Activated naive CD4-positive, alpha-beta T cell treated with anti-CD3 and anti-CD28 coated beads for 36 hours (primary cell): ENCODE measurements at regions of chr3 and their contacts with region 1.

Region 1: DNA sequence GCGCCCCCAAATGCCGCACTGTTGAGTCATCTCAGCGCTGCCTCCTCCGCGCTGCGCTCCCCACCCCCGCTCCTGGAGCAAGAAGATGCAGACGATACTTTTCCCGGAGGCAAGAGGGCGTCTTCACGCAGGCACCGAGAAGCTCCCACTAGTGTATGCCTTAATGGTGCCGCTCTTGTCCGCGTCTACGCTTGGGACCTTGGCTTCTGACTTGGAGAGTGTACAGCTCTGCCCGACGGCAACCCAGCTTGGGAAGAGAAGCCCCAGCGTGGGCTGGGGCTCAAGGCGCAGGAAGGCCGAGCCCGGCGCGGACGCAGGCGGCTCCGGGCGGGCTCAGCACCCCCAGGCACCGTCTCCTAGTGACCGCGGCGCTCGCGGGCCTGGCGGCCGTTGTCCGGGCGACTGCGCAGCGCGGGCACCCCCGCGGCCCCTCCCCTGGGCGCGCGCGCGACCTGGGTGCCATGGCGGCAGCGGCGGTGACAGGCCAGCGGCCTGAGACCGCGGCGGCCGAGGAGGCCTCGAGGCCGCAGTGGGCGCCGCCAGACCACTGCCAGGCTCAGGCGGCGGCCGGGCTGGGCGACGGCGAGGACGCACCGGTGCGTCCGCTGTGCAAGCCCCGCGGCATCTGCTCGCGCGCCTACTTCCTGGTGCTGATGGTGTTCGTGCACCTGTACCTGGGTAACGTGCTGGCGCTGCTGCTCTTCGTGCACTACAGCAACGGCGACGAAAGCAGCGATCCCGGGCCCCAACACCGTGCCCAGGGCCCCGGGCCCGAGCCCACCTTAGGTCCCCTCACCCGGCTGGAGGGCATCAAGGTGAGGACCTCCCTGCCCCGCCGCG is at the start of gene P4HTM:
- DNase-seq: peak; percentile 88
- H3K4me3 Mint-ChIP-seq: peak within 1 kb of the TSS; percentile 94
- H3K27ac Mint-ChIP-seq: peak within 1 kb of the TSS; percentile 93
- H3K4me1 Mint-ChIP-seq: peaks cover 36% of the 10 kb centered on the region
- H3K27me3 Mint-ChIP-seq: no peaks in the 10 kb centered on the region
- total RNA-seq, gene P4HTM: 20.2 to 21.7 TPM

Region 2: DNA sequence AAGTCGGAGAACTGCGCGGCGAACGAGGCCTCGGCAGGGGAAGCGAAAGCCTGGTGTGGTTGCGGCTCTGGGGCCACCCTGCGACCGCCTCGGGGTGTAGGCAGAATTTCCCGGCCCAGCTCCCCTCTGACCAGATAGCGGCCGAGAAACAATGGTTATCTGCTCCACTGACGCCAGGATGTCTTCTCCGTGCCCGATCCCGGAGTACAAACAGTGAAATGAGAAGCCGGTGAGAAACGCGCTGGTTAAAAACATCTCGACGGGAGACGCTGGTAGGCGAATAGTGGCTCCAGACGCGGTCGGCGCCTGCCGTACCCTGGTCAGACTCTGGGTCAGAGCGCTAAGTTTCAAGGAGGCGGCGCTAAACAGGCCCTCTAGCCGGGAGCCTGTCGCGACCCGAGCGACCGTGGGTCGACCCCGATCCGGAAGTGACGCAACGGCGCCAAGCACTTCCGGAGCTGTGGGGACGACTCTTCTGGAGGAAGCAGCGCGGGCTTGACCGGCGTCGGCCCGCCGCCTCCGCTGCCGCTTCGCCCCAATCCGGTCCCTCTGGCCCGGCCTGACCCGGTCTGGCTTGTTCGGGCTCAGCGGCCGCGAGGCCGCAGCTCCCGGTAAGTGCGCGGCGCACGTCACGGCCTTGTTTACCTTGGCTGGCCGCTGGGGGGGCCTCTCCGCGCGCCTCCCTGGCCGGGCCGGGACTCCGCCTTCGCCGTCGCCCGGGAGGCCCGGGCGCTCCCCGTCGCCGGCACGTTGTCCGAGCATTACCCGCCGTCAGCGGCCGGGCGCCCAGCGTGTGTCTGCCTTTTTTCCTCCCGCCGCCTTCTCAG is 71.4 kb before region 1 on chr3 and contains the start of gene ARIH2:
- CTCF ChIA-PET with region 1: interaction called, 10 read pairs
- intact Hi-C with region 1: loop called (anchors 2 kb)
- DNase-seq: peak; percentile 89
- H3K4me3 Mint-ChIP-seq: peak within 1 kb of the TSS; percentile 98
- H3K27ac Mint-ChIP-seq: peak within 1 kb of the TSS; percentile 100
- H3K4me1 Mint-ChIP-seq: peaks cover 29% of the 10 kb centered on the region
- H3K27me3 Mint-ChIP-seq: no peaks in the 10 kb centered on the region
- total RNA-seq, gene ARIH2: 96.1 to 99.1 TPM

Region 3: GRCh38 chr3:49013755-49014628 is 24.0 kb after region 1 on chr3:
- CTCF ChIA-PET with region 1: interaction called, 23 read pairs
- intact Hi-C with region 1: no loop called
- DNase-seq: no peak
- H3K4me3 Mint-ChIP-seq: no peak overlapping the region
- H3K27ac Mint-ChIP-seq: no peak overlapping the region
- H3K4me1 Mint-ChIP-seq: peaks cover 10% of the 10 kb centered on the region
- H3K27me3 Mint-ChIP-seq: no peaks in the 10 kb centered on the region

Region 4: DNA sequence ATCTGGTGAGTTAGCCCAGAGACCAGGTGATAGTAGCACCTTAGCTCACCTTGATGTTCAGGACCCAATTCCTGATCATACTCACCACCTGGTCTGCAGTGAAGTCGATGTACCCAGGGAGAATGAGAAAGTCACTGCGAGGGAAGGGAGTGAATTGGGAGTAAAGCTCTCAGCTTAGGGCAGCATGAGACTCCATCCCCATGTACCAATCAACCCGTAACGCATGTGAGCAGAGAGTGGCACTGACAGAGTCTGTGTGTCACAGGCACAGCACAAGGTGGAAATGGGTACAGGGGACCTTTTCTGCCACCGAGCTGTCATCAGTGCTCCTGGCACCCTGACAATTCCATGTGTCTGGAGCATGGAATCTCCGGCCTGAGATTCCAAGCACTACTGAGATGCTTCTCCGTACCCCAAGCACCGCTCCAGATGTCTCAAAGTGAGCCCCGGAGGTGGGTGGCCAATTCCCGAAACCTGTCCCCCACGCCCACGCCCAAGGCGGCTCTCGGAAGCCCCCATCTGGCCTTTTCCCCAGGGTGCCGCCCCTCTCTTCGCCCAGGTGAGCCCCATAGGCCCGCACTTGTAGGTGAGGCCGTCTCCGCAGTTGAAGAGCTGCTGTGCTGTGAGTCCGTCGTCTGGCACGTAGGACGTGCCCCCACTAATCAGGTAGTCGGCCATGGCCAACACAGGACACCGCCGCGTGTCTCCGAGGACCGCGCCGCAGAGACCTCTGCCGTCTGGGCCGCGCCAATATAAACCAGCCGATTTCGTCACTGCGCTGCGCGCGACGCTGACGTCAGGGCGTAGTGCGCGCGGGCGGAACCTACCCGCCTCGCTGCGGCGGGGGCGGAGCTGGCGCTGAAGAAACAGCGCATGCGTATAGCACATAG is 38.9 kb after region 1 on chr3 and contains the start of gene IMPDH2:
- CTCF ChIA-PET with region 1: interaction called, 36 read pairs
- intact Hi-C with region 1: loop called (anchors 1 kb)
- DNase-seq: peak; percentile 94
- H3K4me3 Mint-ChIP-seq: peak within 1 kb of the TSS; percentile 91
- H3K27ac Mint-ChIP-seq: peak within 1 kb of the TSS; percentile 89
- H3K4me1 Mint-ChIP-seq: peaks cover 53% of the 10 kb centered on the region
- H3K27me3 Mint-ChIP-seq: no peaks in the 10 kb centered on the region
- total RNA-seq, gene IMPDH2: 565 to 593 TPM

Region 5: GRCh38 chr3:49276475-49277382 is 286.7 kb after region 1 on chr3 and contains the start of gene C3orf62:
- CTCF ChIA-PET with region 1: no interaction called
- intact Hi-C with region 1: loop called (anchors 2 kb)
- DNase-seq: peak; percentile 89
- H3K4me3 Mint-ChIP-seq: peak within 1 kb of the TSS; percentile 75
- H3K27ac Mint-ChIP-seq: peak within 1 kb of the TSS; percentile 82
- H3K4me1 Mint-ChIP-seq: peaks cover 33% of the 10 kb centered on the region
- H3K27me3 Mint-ChIP-seq: no peaks in the 10 kb centered on the region
- total RNA-seq, gene C3orf62: 1.7 TPM

Region 6: GRCh38 chr3:50873376-50874157 is 1883.6 kb after region 1 on chr3:
- CTCF ChIA-PET with region 1: no interaction called
- intact Hi-C with region 1: no loop called
- DNase-seq: no peak
- H3K4me3 Mint-ChIP-seq: no peak overlapping the region
- H3K27ac Mint-ChIP-seq: no peak overlapping the region
- H3K4me1 Mint-ChIP-seq: no peaks in the 10 kb centered on the region
- H3K27me3 Mint-ChIP-seq: peaks cover 9% of the 10 kb centered on the region